Activated CD4-positive, alpha-beta T cell treated with anti-CD3 and anti-CD28 coated beads, Interleukin-2, amount 10 ng/mL, durations not matched to agents 7 days and 5 days (primary cell): ENCODE measurements at regions of chr1 and their contacts with region 1.

Region 1: DNA sequence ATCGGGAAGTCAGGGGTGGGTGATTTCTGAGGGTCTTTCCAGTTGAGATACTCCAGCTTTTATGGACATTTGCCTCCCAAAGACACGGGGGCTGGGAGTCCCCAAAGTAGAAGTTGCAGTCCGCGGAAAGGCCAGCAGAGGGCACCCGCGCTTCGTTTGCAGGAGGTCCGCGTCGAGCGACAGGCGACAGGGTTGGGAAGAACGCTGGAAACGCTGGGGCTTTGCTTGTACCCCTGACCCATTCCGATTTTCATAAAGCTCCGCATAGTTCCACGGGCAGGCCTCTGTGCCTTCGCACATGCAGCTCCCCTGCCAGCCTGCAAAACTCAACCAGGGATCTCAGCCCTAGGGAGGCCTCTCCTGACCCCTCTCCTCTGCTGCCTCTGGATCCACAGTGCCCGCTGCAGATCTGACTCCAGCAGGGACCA is 44.2 kb upstream of the LAPTM5 start:
- DNase-seq: peak; percentile 78
- H3K4me3 Mint-ChIP-seq: no peak overlapping the region
- H3K27ac Mint-ChIP-seq: no peak overlapping the region
- H3K4me1 Mint-ChIP-seq: peaks cover 6% of the 10 kb centered on the region
- H3K27me3 Mint-ChIP-seq: peaks cover 37% of the 10 kb centered on the region

Region 2: DNA sequence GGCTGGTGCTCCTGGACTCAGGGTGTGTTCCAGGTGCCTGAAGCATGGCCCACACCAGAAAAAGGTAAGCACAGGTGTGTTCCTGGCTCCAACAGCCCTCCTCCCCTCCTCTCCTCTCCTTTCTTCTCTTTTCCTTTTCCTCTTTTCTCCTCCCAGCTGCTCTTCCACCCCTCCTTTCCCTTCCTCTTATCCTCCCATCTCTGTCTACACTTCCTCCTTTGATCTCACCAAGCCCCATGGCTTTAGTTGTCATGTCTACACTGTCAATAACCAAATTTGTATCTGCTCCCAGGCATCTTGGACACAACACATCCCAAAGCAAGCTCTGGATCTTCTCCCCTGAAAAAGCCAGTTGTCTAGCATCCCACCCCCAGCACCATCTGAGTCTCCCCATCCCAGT is 12.5 kb after region 1 on chr1:
- CTCF ChIA-PET with region 1: interaction called, 10 read pairs
- POLR2A ChIA-PET with region 1: no interaction called
- DNase-seq: no peak
- H3K4me3 Mint-ChIP-seq: no peak overlapping the region
- H3K27ac Mint-ChIP-seq: no peak overlapping the region
- H3K4me1 Mint-ChIP-seq: no peaks in the 10 kb centered on the region
- H3K27me3 Mint-ChIP-seq: peaks cover 36% of the 10 kb centered on the region

Region 3: GRCh38 chr1:30868833-30869435 is 67.1 kb after region 1 on chr1:
- CTCF ChIA-PET with region 1: no interaction called
- POLR2A ChIA-PET with region 1: no interaction called
- DNase-seq: no peak
- H3K4me3 Mint-ChIP-seq: no peak overlapping the region
- H3K27ac Mint-ChIP-seq: no peak overlapping the region
- H3K4me1 Mint-ChIP-seq: peaks cover 5% of the 10 kb centered on the region
- H3K27me3 Mint-ChIP-seq: peaks cover 16% of the 10 kb centered on the region

Region 4: DNA sequence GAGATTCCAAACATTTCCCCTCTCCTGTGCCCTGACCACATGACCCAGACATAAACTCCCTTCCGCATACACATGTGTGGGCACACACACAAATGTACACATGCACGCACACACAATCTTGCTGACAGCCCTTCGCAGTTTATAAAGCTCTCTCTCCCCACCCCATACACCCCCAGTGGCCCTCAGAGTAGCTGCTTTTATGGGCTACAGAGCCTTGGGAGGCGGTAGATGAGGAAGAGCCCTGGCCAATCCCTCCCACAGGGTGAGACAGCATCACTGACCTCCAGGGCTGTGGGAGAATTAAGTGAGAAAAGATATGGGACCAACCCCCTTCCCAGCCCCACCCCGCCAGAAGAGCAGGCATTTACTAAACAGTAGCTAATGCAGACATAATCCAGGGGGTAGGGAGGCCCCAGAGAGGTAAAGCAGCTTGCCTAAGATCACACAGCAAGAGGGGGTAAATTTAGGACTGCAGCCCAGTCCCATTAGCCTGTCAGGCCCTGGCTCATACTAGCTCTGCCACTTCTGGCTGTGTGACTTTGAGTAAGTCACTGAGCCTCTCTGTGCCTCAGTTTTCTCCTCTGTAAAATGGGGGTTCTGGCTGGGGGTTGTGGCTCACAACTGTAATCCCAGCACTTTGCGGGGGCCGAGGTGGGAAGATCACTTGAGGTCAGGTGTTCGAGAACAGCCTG is 101.7 kb after region 1 on chr1:
- CTCF ChIA-PET with region 1: interaction called, 10 read pairs
- POLR2A ChIA-PET with region 1: no interaction called
- DNase-seq: no peak
- H3K4me3 Mint-ChIP-seq: no peak overlapping the region
- H3K27ac Mint-ChIP-seq: no peak overlapping the region
- H3K4me1 Mint-ChIP-seq: peaks cover 6% of the 10 kb centered on the region
- H3K27me3 Mint-ChIP-seq: peaks cover 30% of the 10 kb centered on the region

Region 5: GRCh38 chr1:30911046-30911954 is 109.5 kb after region 1 on chr1:
- CTCF ChIA-PET with region 1: interaction called, 26 read pairs
- POLR2A ChIA-PET with region 1: no interaction called
- DNase-seq: peak; percentile 55
- H3K4me3 Mint-ChIP-seq: no peak overlapping the region
- H3K27ac Mint-ChIP-seq: no peak overlapping the region
- H3K4me1 Mint-ChIP-seq: peaks cover 16% of the 10 kb centered on the region
- H3K27me3 Mint-ChIP-seq: peaks cover 36% of the 10 kb centered on the region

Region 6: GRCh38 chr1:30929135-30929889 is 127.5 kb after region 1 on chr1:
- CTCF ChIA-PET with region 1: interaction called, 10 read pairs
- POLR2A ChIA-PET with region 1: no interaction called
- DNase-seq: peak; percentile 66
- H3K4me3 Mint-ChIP-seq: no peak overlapping the region
- H3K27ac Mint-ChIP-seq: no peak overlapping the region
- H3K4me1 Mint-ChIP-seq: peaks cover 2% of the 10 kb centered on the region
- H3K27me3 Mint-ChIP-seq: no peaks in the 10 kb centered on the region